CD8-positive, alpha-beta T cell (primary cell): ENCODE measurements at regions of chr4 and their contacts with region 1.

Region 1: DNA sequence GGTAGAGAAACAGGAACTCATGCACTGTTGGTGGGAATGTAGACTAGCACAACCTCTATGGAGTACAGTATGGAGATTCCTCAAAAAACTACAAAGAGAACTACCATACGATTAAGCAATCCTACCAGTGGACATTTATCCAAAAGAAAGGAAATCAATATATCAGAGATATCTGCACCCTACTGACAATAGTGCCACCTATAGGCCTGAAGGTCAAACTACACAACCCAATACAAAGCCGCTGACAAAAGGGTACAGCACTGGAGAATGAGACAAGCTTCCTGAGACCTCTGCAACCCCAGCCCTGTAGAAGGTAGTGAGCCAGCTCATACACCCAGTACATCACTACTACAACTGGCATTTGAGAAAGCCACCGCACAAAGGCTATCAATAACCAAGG is 67.1 kb downstream of the CBR4 start:
- DNase-seq: peak in 2 of 9 experiments; percentile 8 to 18
- ATAC-seq: no peak
- H3K4me3 ChIP-seq: no peak overlapping the region
- H3K4me3 Mint-ChIP-seq: no peak overlapping the region
- H3K27ac ChIP-seq: no peak overlapping the region
- H3K27ac Mint-ChIP-seq: no peak overlapping the region
- H3K4me1 ChIP-seq: no peaks in the 10 kb centered on the region
- H3K4me1 Mint-ChIP-seq: no peaks in the 10 kb centered on the region
- H3K27me3 ChIP-seq: no peaks in the 10 kb centered on the region
- H3K27me3 Mint-ChIP-seq: no peaks in the 10 kb centered on the region
- CTCF ChIP-seq: no peak

Region 2: DNA sequence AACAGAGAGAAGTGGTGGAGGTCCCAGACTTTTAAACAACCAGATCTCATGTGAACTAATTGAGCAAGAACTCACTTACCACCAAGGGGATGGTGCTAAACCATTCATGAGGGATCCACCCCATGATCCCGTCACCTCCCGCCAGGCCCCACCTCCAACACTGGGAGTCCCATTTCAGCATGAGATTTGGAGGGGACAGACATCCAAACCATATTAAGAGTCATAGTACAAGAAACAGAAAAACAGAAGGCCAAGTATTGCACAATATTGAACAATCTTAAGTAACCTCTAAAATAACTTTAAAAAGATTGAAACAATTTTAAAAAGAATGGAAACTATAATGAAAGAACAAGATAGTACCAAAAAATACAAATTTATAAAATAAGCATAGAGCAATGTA is 42.9 kb before region 1 on chr4:
- CTCF ChIA-PET with region 1: no interaction called
- POLR2A ChIA-PET with region 1: no interaction called
- intact Hi-C with region 1: loop called in 1 of 2 experiments (anchors 1 kb)
- DNase-seq: no peak
- ATAC-seq: no peak
- H3K4me3 ChIP-seq: no peak overlapping the region
- H3K4me3 Mint-ChIP-seq: no peak overlapping the region
- H3K27ac ChIP-seq: no peak overlapping the region
- H3K27ac Mint-ChIP-seq: no peak overlapping the region
- H3K4me1 ChIP-seq: no peaks in the 10 kb centered on the region
- H3K4me1 Mint-ChIP-seq: no peaks in the 10 kb centered on the region
- H3K27me3 ChIP-seq: no peaks in the 10 kb centered on the region
- H3K27me3 Mint-ChIP-seq: no peaks in the 10 kb centered on the region
- CTCF ChIP-seq: no peak